ENCODE measurements at regions of chr6 and their contacts with region 1.

Region 1: GRCh38 chr6:160930547-160931377 is 60.8 kb upstream of the MAP3K4 start:
- DNase-seq: peak; percentile 61
- H3K4me3 ChIP-seq: peak overlapping the region; percentile 53 to 66 (median 54)
- H3K27ac ChIP-seq: no peak overlapping the region
- H3K4me1 ChIP-seq: peaks cover 4% of the 10 kb centered on the region
- H3K27me3 ChIP-seq: no peaks in the 10 kb centered on the region
- CTCF ChIP-seq: peak; percentile 76 to 92

Region 2: DNA sequence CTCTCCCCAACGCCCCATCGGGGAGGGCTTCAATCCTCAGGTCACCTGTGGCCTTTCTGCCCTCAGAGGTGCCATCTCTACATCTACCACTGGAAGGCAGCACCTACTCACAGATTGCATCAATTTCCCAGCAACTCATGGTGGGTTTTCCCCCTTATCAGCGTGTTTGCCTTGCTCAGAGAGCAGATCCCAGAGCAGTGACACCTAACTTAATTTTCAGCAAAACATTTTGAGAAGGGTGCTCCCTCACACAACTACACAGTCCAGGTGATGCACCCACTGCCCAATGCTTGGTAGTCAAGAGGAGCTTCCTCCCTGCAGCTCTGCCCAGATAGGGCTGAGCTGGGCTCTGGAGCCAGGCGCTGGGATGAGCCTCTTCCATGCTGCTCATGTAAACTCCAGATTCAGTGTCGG is 180.5 kb before region 1 on chr6:
- CTCF ChIA-PET with region 1: no interaction called
- dilution Hi-C with region 1: no loop called
- in situ Hi-C with region 1: no loop called
- intact Hi-C with region 1: loop called (anchors 2 kb)
- DNase-seq: peak; percentile 25
- H3K4me3 ChIP-seq: no peak overlapping the region
- H3K27ac ChIP-seq: no peak overlapping the region
- H3K4me1 ChIP-seq: no peaks in the 10 kb centered on the region
- H3K27me3 ChIP-seq: no peaks in the 10 kb centered on the region
- CTCF ChIP-seq: peak; percentile 85 to 86

Region 3: DNA sequence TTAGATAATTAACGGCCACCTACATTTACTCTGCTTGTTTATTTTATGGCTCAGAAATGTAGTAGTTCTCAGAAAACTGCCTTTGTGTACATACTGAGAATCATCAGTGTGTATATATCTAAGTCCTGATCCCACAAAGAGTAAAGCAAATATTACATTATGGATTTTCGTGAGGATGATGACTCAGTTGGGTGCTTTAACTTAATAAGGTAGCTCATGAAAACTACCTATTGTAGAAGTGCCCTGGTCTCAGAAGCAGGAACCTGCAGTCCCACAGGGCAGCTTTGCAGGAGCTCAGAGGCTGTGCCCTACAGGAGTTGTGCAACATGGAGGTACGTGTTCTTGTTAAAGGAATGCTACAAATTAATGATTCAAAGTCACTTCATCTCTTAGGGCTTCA is 120.5 kb before region 1 on chr6:
- CTCF ChIA-PET with region 1: no interaction called
- dilution Hi-C with region 1: no loop called
- in situ Hi-C with region 1: no loop called
- intact Hi-C with region 1: no loop called
- DNase-seq: peak; percentile 41
- H3K4me3 ChIP-seq: no peak overlapping the region
- H3K27ac ChIP-seq: no peak overlapping the region
- H3K4me1 ChIP-seq: no peaks in the 10 kb centered on the region
- H3K27me3 ChIP-seq: no peaks in the 10 kb centered on the region
- CTCF ChIP-seq: no peak

Region 4: DNA sequence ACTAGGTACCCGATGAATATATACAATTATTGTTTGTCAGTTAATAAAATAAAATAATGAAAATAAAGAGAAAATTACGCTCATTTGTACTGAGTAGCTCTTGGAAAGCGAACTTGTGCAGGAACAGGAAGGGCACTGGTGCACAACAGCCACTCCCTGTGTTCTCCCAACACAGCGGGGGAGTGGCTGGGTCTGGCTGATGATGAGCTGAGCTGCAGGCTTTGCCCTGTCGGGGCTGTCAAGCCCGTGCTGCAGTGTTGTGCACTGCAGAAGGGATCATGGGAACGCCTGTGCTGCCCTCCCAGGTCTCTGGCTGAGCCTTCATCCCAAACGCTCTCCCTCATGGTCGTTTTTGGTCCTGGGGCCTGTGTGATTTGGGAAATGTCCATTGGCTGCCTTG is 70.9 kb before region 1 on chr6:
- CTCF ChIA-PET with region 1: no interaction called
- dilution Hi-C with region 1: no loop called
- in situ Hi-C with region 1: no loop called
- intact Hi-C with region 1: no loop called
- DNase-seq: no peak
- H3K4me3 ChIP-seq: no peak overlapping the region
- H3K27ac ChIP-seq: no peak overlapping the region
- H3K4me1 ChIP-seq: no peaks in the 10 kb centered on the region
- H3K27me3 ChIP-seq: no peaks in the 10 kb centered on the region
- CTCF ChIP-seq: no peak

Region 5: DNA sequence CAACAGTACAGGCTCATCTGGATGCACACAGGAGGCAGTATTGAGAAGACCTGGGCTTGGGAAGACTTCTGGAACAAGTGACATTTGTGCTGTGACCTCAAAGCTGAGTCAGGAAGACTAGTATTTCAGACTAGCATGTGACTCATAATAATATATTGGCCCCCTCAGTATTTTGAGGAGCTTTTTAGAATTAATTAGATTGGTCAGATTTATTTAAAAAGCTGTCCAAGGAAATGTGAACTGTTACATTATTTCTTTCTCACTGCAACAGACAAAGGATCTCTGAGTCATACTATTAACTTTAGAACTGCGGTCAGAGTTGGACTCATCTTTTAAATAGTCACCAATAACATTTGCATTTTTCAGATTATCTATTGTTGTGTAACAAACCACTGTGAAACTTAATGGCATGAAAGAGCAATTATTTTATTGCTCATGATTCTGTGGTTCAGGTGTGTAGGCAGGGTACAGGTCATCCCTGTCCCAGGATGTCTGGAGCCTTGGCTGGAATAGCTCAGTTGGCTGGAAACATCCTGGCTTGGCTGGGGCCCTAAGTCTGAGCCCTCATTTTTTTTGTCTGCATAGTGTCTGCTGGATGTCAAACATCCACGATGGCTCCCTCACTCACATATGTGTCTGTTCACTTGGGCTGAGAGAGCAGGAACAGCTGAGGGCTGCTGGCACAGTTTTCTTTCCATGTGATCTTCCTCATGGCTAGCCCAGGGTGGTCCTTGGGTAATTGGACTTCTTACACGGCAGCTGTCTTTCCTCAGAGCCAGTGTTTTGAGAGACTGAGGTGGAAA is 107.7 kb after region 1 on chr6:
- CTCF ChIA-PET with region 1: no interaction called
- dilution Hi-C with region 1: no loop called
- in situ Hi-C with region 1: no loop called
- intact Hi-C with region 1: loop called (anchors 1 kb)
- DNase-seq: peak; percentile 96
- H3K4me3 ChIP-seq: no peak overlapping the region
- H3K27ac ChIP-seq: peak overlapping the region; percentile 93
- H3K4me1 ChIP-seq: peaks cover 32% of the 10 kb centered on the region
- H3K27me3 ChIP-seq: no peaks in the 10 kb centered on the region
- CTCF ChIP-seq: peak; percentile 36 to 51

Region 6: GRCh38 chr6:161088676-161089328 is 158.0 kb after region 1 on chr6:
- CTCF ChIA-PET with region 1: no interaction called
- dilution Hi-C with region 1: no loop called
- in situ Hi-C with region 1: no loop called
- intact Hi-C with region 1: no loop called
- DNase-seq: no peak
- H3K4me3 ChIP-seq: no peak overlapping the region
- H3K27ac ChIP-seq: no peak overlapping the region
- H3K4me1 ChIP-seq: peaks cover 11% of the 10 kb centered on the region
- H3K27me3 ChIP-seq: no peaks in the 10 kb centered on the region
- CTCF ChIP-seq: no peak

Region 7: GRCh38 chr6:161101517-161101916 is 170.8 kb after region 1 on chr6:
- CTCF ChIA-PET with region 1: no interaction called
- dilution Hi-C with region 1: no loop called
- in situ Hi-C with region 1: loop called in 1 of 2 experiments (anchors 25 kb)
- intact Hi-C with region 1: loop called (anchors 2 kb)
- DNase-seq: no peak
- H3K4me3 ChIP-seq: no peak overlapping the region
- H3K27ac ChIP-seq: no peak overlapping the region
- H3K4me1 ChIP-seq: peaks cover 20% of the 10 kb centered on the region
- H3K27me3 ChIP-seq: no peaks in the 10 kb centered on the region
- CTCF ChIP-seq: no peak

Region 8: GRCh38 chr6:161273752-161274487 is 343.2 kb after region 1 on chr6 and contains the start of gene AGPAT4:
- CTCF ChIA-PET with region 1: no interaction called
- dilution Hi-C with region 1: no loop called
- in situ Hi-C with region 1: no loop called
- intact Hi-C with region 1: loop called (anchors 5 kb)
- DNase-seq: peak; percentile 95
- H3K4me3 ChIP-seq: peak within 1 kb of the TSS; percentile 67 to 85 (median 69)
- H3K27ac ChIP-seq: peak within 1 kb of the TSS; percentile 95
- H3K4me1 ChIP-seq: peaks cover 12% of the 10 kb centered on the region
- H3K27me3 ChIP-seq: no peaks in the 10 kb centered on the region
- CTCF ChIP-seq: no peak
- total RNA-seq, gene AGPAT4: 12.5 to 15.8 TPM